Tibial artery (tissue), 4 donors: ENCODE measurements at regions of chr10 and their contacts with region 1.

Region 1: DNA sequence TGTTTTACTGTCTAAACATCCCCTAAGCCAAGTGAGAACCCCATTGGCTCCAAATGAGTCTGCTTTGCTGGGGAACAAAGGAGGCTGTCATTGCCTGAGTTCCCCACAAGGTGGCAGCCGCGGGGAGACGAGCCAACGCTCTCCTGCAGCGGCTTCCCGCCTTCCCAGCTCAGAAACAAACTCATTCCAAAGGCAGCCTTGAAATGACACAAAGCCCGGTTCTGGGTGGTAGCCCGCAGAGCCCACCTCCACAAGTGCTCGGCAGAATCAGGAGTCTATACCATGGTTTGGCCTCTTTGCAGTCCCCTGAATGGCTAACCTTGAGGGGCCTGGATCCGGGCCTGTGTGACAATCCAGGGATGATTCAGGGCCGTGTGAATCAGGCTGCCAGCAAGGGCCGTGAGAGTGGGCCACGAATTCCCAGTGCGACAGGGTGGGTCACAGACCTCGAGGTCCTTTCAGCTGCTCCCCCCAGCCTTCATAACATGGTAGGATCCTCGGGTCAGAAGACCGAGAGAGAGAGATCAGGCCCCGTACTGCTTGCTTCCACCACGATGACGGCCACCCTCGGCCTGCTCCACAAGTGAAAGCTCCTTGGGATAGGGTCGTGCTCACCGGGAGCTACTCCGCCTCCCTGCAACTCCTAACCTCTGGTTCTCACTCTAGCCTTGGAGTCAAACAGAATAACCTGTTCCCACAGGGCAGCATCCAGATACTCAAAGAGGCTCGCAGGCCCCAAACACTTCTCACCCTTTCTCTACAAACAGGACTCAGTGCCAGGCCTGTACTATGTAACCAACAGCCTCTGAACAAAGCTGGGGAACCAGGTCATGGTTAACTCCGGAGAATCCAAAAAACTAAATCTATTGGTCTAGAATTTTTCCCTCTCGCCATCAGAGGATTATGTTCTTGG is 79.6 kb downstream of the DLG5 start:
- DNase-seq: peak; percentile 74 to 86
- H3K4me3 ChIP-seq: peak overlapping the region in 1 of 2 donors; percentile 6
- H3K27ac ChIP-seq: peak overlapping the region; percentile 65 to 66
- H3K4me1 ChIP-seq: peaks cover 0 to 24% (median 7%) of the 10 kb centered on the region in 4 donors
- H3K27me3 ChIP-seq: no peaks in the 10 kb centered on the region
- CTCF ChIP-seq: peak; percentile 95 to 97

Region 2: DNA sequence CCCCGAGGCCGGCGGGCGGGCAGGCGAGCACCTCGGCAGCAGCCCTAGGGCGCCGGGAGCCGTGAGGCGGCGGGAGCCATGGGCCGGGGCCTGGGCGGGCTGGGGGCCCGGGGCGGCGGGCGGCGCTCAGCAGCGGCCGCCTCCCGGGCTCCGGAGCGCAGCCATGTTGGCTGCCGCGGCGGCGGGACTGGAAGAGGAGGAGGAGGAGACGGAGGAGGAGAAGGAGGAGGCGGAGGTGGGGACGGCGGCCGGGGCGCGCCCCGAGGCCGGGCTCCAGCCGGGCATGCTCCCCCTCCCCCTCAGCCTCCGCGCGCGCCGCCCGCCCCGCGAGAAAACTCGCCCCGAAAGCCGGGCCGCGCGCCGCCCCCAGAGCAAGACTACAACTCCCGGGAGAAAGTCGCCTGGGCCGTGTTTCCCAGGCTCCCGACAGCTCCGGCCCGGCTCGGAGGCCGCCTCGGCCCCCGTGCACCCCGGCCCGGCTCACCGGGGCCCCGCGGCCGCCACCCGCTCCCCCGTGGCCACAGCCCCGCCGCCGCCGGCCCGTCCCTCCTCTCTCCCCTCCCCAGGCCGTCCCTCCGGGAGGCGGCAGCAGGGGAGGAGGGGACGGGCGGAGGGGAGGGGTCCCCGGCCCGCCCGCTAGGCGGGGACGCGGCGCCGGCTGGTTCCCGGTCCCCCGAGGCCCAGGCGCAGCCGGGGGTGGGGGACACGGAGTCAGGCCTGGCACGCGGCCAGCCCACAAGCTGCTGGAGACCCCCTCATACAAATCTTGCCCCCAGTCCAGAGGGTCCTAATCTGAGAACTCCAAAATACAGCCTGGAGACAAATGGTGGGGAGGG is 79.8 kb after region 1 on chr10 and contains the start of gene DLG5:
- intact Hi-C with region 1: loop called (anchors 10 kb)
- DNase-seq: peak; percentile 68 to 84
- H3K4me3 ChIP-seq: peak within 1 kb of the TSS; percentile 67 to 73
- H3K27ac ChIP-seq: peak within 1 kb of the TSS; percentile 78 to 87
- H3K4me1 ChIP-seq: peaks cover 0 to 50% (median 23%) of the 10 kb centered on the region in 4 donors
- H3K27me3 ChIP-seq: no peaks in the 10 kb centered on the region
- CTCF ChIP-seq: peak in 1 of 2 experiments; percentile 5

Region 3: DNA sequence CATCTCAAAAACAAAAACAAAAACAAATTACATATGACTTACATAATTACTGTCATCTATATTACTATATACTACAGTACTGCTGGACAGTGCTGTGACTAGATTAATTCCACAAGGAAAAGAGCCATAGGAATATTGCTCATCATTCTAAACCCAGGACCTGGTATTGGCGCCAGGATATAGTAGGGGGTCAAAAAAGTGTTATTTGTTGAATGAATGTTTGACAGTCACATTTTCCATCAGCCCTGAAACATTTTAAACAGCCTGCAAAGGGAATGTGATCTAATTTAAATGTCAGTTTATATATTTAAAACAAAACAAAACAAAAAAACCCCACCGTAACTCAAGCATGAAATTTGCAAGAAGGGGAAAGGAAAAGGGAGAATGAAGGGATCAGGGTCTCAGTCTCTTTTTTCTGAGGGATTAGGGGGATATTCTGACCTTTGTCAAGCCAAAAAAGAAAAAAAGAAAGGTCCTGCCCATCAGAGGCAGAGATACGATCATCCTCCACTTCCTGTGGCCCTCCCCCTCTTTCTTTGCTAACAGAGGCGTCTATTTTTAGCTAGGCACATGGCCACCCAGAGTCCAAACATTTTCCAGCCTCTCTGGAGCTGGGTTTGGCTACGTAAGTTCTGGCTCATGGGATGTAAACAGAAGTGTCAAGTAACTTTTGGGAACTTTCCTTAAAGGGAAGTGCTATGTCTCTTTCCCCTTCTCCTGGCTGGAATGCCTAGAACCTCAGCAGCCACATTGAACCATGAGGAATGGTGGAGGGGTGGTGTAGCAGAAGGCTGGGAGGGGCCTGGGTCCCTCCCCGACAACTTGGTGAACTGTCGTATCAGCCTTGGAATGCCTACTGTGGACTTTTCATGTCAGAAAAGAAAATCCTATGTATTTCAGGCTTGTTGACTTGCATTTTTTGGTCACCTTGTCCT is 124.2 kb after region 1 on chr10:
- intact Hi-C with region 1: loop called (anchors 5 kb)
- DNase-seq: peak; percentile 90 to 92
- H3K4me3 ChIP-seq: peak overlapping the region; percentile 13 to 17
- H3K27ac ChIP-seq: peak overlapping the region; percentile 81 to 87
- H3K4me1 ChIP-seq: peaks cover 0 to 55% (median 23%) of the 10 kb centered on the region in 4 donors
- H3K27me3 ChIP-seq: no peaks in the 10 kb centered on the region
- CTCF ChIP-seq: no peak

Region 4: DNA sequence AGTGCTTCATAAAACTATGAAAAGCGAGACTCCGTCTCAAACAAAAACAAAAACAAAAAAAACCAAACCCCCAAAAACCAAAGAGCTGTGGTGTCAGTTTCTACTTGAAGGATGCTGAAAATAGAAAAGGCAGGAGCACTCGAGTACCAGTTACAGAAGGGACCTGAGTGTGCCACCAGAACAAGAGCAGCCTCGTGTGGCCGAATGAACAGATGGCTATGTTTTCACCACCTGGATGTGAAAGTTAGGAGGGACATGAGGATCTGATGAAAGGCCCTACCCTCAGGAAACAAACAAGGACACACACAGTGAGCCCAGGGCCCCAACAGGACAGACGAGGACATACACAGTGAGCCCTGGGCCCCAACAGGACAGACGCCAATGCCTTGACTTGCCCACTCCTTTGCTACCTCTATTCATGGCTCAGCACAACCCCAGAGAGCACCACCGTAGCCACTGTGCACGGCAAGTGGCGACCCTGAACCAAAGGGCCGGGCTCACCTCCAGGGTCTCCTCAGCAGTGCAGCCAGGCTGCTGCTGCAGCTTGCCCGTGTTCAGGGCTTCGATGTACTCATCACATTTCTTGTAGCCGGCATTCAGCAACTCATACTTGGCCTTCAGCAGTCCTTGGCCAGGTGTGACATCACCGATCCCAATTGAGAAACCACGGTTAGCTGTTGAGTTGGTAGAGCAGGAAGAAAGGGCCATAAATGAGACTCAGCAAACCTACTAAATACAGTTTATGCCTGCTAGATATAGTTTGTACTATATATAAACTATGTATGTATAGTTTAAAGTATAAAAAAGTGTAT is 157.4 kb after region 1 on chr10:
- intact Hi-C with region 1: no loop called
- DNase-seq: no peak
- H3K4me3 ChIP-seq: no peak overlapping the region
- H3K27ac ChIP-seq: no peak overlapping the region
- H3K4me1 ChIP-seq: no peaks in the 10 kb centered on the region
- H3K27me3 ChIP-seq: no peaks in the 10 kb centered on the region
- CTCF ChIP-seq: no peak

Region 5: GRCh38 chr10:78029269-78030226 is 182.6 kb after region 1 on chr10 and contains the start of gene POLR3A:
- intact Hi-C with region 1: loop called (anchors 5 kb)
- DNase-seq: peak; percentile 96 to 98
- H3K4me3 ChIP-seq: peak within 1 kb of the TSS; percentile 69 to 96
- H3K27ac ChIP-seq: peak within 1 kb of the TSS; percentile 74 to 80
- H3K4me1 ChIP-seq: peaks cover 0 to 22% (median 13%) of the 10 kb centered on the region in 4 donors
- H3K27me3 ChIP-seq: no peaks in the 10 kb centered on the region
- CTCF ChIP-seq: peak; percentile 68 to 70